CD14-positive monocyte (primary cell): ENCODE measurements at regions of chr11 and their contacts with region 1.

Region 1: GRCh38 chr11:102733232-102733875 is 8.6 kb upstream of the MMP8 start:
- DNase-seq: peak; percentile 51 to 72 (median 58)
- H3K4me3 ChIP-seq: no peak overlapping the region
- H3K4me3 Mint-ChIP-seq: no peak overlapping the region
- H3K27ac ChIP-seq: no peak overlapping the region
- H3K27ac Mint-ChIP-seq: no peak overlapping the region
- H3K4me1 ChIP-seq: peaks cover 4 to 8% of the 10 kb centered on the region in 2 donors
- H3K4me1 Mint-ChIP-seq: peaks cover 9% of the 10 kb centered on the region
- H3K27me3 ChIP-seq: peaks cover 14 to 27% of the 10 kb centered on the region in 2 donors
- H3K27me3 Mint-ChIP-seq: peaks cover 9 to 22% (median 15%) of the 10 kb centered on the region in 3 donors
- CTCF ChIP-seq: peak; percentile 89

Region 2: GRCh38 chr11:102882389-102883024 is 149.2 kb after region 1 on chr11:
- intact Hi-C with region 1: no loop called
- DNase-seq: peak in 1 of 3 donors; percentile 53
- H3K4me3 ChIP-seq: no peak overlapping the region
- H3K4me3 Mint-ChIP-seq: no peak overlapping the region
- H3K27ac ChIP-seq: no peak overlapping the region
- H3K27ac Mint-ChIP-seq: no peak overlapping the region
- H3K4me1 ChIP-seq: no peaks in the 10 kb centered on the region
- H3K4me1 Mint-ChIP-seq: no peaks in the 10 kb centered on the region
- H3K27me3 ChIP-seq: no peaks in the 10 kb centered on the region
- H3K27me3 Mint-ChIP-seq: peaks cover 1 to 12% (median 4%) of the 10 kb centered on the region in 3 donors
- CTCF ChIP-seq: no peak

Region 3: GRCh38 chr11:102935514-102935913 is 202.2 kb after region 1 on chr11:
- intact Hi-C with region 1: loop called (anchors 5 to 10 kb)
- DNase-seq: no peak
- H3K4me3 ChIP-seq: no peak overlapping the region
- H3K4me3 Mint-ChIP-seq: peak overlapping the region in 1 of 2 donors; percentile 33
- H3K27ac ChIP-seq: no peak overlapping the region
- H3K27ac Mint-ChIP-seq: no peak overlapping the region
- H3K4me1 ChIP-seq: no peaks in the 10 kb centered on the region
- H3K4me1 Mint-ChIP-seq: no peaks in the 10 kb centered on the region
- H3K27me3 ChIP-seq: peaks cover 8 to 12% of the 10 kb centered on the region in 2 donors
- H3K27me3 Mint-ChIP-seq: peaks cover 12 to 25% (median 13%) of the 10 kb centered on the region in 3 donors
- CTCF ChIP-seq: no peak

Region 4: GRCh38 chr11:102940714-102941588 is 207.6 kb after region 1 on chr11:
- intact Hi-C with region 1: loop called (anchors 5 to 10 kb)
- DNase-seq: peak; percentile 49 to 63 (median 60)
- H3K4me3 ChIP-seq: no peak overlapping the region
- H3K4me3 Mint-ChIP-seq: peak overlapping the region in 1 of 2 donors; percentile 2
- H3K27ac ChIP-seq: no peak overlapping the region
- H3K27ac Mint-ChIP-seq: no peak overlapping the region
- H3K4me1 ChIP-seq: no peaks in the 10 kb centered on the region
- H3K4me1 Mint-ChIP-seq: no peaks in the 10 kb centered on the region
- H3K27me3 ChIP-seq: no peaks in the 10 kb centered on the region
- H3K27me3 Mint-ChIP-seq: peaks cover 11 to 14% (median 14%) of the 10 kb centered on the region in 3 donors
- CTCF ChIP-seq: peak; percentile 84